ENCODE measurements at regions of chr12 and their contacts with region 1.

Region 1: DNA sequence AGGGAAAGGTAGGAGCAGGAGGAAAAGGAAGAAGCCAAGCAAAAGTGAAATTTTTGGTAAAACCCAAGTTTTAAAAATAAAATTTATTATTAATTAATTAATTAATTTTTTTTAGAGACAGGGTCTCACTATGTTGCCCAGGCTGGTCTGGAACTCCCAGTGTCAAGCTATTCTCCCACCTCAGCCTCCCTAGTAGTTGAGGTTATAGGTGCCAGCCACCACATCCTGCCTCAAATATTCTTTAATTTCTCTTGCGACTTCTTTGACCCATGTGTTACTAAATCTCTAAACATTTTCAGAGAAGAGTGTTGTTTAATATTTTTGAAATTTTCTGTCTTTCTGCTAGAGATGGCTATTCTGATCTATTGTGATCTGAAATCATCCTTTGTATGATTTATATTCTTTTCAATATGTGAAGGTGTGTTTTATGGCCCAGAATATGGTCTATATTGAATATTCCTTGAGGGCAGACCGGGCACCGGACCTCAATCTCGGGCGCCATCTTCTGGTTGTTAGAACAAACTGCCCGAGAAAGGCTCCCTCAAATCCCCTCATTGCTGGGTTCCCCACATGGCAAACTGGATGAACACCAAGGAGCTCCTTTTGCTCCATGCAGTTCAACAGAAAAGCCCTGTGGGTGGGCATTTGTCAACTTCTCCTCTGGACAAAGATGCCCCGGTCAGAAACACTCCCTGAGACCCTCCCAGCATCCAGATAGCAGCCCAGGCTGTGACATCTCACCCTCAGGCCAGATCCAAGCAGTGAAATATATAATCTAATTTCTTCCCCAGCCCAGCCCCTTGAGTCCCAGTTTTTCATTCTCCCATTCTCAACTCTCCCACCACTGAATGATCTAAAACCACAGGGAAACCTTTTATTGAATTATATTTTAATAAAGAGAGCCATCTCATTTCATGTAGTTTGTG is 110.5 kb downstream of the ASCL4 start:
- DNase-seq: no peak
- ATAC-seq: no peak
- H3K4me3 ChIP-seq: no peak overlapping the region
- H3K27ac ChIP-seq: no peak overlapping the region
- H3K4me1 ChIP-seq: no peaks in the 10 kb centered on the region
- H3K27me3 ChIP-seq: no peaks in the 10 kb centered on the region
- CTCF ChIP-seq: peak in 3 of 5 experiments; percentile 29 to 43 (median 35)
- POLR2A ChIP-seq: no peak

Region 2: DNA sequence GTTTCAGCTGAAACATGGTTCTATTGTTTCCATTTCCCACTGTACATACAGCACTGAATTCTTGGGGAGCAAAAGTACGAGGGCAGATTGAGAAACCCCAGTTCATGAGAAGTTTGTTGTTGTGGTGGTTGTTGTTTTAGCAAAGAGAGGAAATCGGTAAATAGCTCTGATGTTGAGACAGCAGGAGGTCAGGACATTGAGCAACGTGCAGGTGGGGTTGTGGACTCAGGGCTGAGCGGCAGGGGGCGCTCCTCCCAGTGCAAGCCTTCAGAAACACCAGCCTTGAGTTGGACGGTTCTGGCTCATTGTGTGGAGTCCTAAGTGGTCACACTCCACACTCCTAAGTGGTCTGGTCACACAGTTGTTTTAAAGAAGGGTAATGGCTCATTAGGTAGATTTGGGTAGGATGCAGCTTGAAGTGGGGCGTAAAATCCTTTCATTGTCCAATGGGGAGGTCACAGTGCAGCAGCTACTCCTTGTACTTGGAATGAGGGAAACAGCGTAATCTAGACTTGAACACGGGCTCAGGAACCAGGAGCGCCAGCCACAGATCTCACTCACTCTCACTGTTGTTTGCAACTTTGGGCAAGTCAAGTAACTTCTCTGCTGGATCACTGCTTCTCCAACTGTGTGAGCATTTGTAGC is 213.9 kb before region 1 on chr12:
- in situ Hi-C with region 1: loop called in 2 of 4 experiments (anchors 10 to 25 kb)
- intact Hi-C with region 1: loop called (anchors 10 kb)
- DNase-seq: no peak
- ATAC-seq: no peak
- H3K4me3 ChIP-seq: no peak overlapping the region
- H3K27ac ChIP-seq: no peak overlapping the region
- H3K4me1 ChIP-seq: no peaks in the 10 kb centered on the region
- H3K27me3 ChIP-seq: peaks cover 0 to 16% (median 3%) of the 10 kb centered on the region in 3 donors
- CTCF ChIP-seq: peak in 3 of 5 experiments; percentile 18 to 47 (median 28)
- POLR2A ChIP-seq: no peak

Region 3: GRCh38 chr12:107685360-107686248 is 199.4 kb before region 1 on chr12 and contains the start of gene PWP1:
- in situ Hi-C with region 1: loop called in 1 of 4 experiments (anchors 10 kb)
- intact Hi-C with region 1: no loop called
- DNase-seq: peak; percentile 82 to 91
- ATAC-seq: peak; percentile 97 to 98
- H3K4me3 ChIP-seq: peak within 1 kb of the TSS; percentile 74 to 97 (median 88)
- H3K27ac ChIP-seq: peak within 1 kb of the TSS; percentile 66 to 87 (median 82)
- H3K4me1 ChIP-seq: peaks cover 18 to 19% of the 10 kb centered on the region in 2 donors
- H3K27me3 ChIP-seq: no peaks in the 10 kb centered on the region
- CTCF ChIP-seq: peak in 1 of 5 experiments; percentile 16
- POLR2A ChIP-seq: peak; percentile 16 to 37
- total RNA-seq, gene PWP1: 37.9 to 62.1 (median 48.0) TPM

Region 4: GRCh38 chr12:107843351-107844311 is 41.4 kb before region 1 on chr12:
- in situ Hi-C with region 1: no loop called
- intact Hi-C with region 1: no loop called
- DNase-seq: no peak
- ATAC-seq: no peak
- H3K4me3 ChIP-seq: peak overlapping the region in 3 of 4 donors; percentile 14 to 40 (median 29)
- H3K27ac ChIP-seq: no peak overlapping the region
- H3K4me1 ChIP-seq: peaks cover 0 to 10% of the 10 kb centered on the region in 2 donors
- H3K27me3 ChIP-seq: peaks cover 40 to 52% (median 43%) of the 10 kb centered on the region in 3 donors
- CTCF ChIP-seq: no peak
- POLR2A ChIP-seq: no peak

Measured in gastrocnemius medialis (tissue), 4 donors.